CD8-positive, alpha-beta T cell (primary cell): ENCODE measurements at regions of chr18 and their contacts with region 1.

Region 1: DNA sequence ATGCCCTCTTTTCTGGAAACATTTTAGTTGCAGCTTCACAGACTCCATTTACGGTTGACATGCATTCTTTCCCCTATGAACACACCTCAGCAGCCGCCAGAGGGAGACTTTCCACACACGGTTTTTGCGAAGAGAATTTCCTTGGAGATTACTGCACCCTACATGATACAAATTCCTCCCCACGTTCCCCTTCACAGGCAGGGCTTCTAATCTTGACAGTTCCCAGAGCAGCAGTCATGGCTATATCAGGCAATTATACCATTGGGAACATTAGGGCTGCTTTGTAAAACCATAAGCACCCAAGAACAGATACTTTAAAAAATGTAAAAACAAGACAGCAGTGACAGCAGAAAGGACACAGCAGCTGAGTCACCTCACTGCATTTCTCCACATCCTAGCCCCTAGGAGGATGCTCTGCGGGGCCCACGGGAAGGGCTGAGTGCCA is 253.8 kb downstream of the TGIF1 start:
- DNase-seq: peak in 4 of 9 experiments; percentile 6 to 28 (median 16)
- ATAC-seq: no peak
- H3K4me3 ChIP-seq: no peak overlapping the region
- H3K4me3 Mint-ChIP-seq: no peak overlapping the region
- H3K27ac ChIP-seq: no peak overlapping the region
- H3K27ac Mint-ChIP-seq: no peak overlapping the region
- H3K4me1 ChIP-seq: no peaks in the 10 kb centered on the region
- H3K4me1 Mint-ChIP-seq: peaks cover 2% of the 10 kb centered on the region
- H3K27me3 ChIP-seq: peaks cover 0 to 8% of the 10 kb centered on the region in 2 experiments
- H3K27me3 Mint-ChIP-seq: peaks cover 39% of the 10 kb centered on the region
- CTCF ChIP-seq: no peak

Region 2: GRCh38 chr18:3995476-3996102 is 291.8 kb after region 1 on chr18:
- CTCF ChIA-PET with region 1: no interaction called
- POLR2A ChIA-PET with region 1: no interaction called
- intact Hi-C with region 1: loop called in 1 of 2 experiments (anchors 10 kb)
- DNase-seq: peak; percentile 3 to 71 (median 46)
- ATAC-seq: peak; percentile 55
- H3K4me3 ChIP-seq: no peak overlapping the region
- H3K4me3 Mint-ChIP-seq: no peak overlapping the region
- H3K27ac ChIP-seq: no peak overlapping the region
- H3K27ac Mint-ChIP-seq: no peak overlapping the region
- H3K4me1 ChIP-seq: no peaks in the 10 kb centered on the region
- H3K4me1 Mint-ChIP-seq: no peaks in the 10 kb centered on the region
- H3K27me3 ChIP-seq: no peaks in the 10 kb centered on the region
- H3K27me3 Mint-ChIP-seq: peaks cover 3% of the 10 kb centered on the region
- CTCF ChIP-seq: peak; percentile 78